Posterior vena cava (tissue), 2 donors: ENCODE measurements at regions of chr18 and their contacts with region 1.

Region 1: GRCh38 chr18:73431620-73432019 is 563.8 kb upstream of the NETO1 start:
- DNase-seq: no peak

Region 2: DNA sequence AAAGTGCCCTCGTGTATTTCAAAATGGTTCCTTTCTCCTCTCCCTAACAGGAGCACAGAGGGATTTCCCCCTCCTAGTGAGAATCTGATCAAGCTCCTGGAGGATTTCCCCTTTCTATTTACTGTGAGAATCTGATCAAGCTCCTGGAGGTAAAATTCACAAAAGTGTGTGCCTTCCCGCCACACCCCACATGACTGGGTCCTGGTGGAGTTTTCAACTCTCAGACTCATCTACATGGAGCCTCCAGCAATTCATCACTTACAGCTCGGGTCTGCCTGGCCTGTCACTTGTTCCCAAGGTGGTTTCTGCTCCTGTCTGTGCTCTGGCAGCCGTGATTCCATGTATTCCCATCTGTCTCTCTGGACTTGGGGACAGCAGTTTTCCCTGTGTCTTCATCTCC is 125.3 kb after region 1 on chr18:
- intact Hi-C with region 1: no loop called
- DNase-seq: no peak

Region 3: GRCh38 chr18:73614812-73615211 is 183.2 kb after region 1 on chr18:
- intact Hi-C with region 1: loop called in 1 of 2 experiments (anchors 10 kb)
- DNase-seq: no peak